Breast epithelium (tissue), 4 donors: ENCODE measurements at regions of chr4 and their contacts with region 1.

Region 1: DNA sequence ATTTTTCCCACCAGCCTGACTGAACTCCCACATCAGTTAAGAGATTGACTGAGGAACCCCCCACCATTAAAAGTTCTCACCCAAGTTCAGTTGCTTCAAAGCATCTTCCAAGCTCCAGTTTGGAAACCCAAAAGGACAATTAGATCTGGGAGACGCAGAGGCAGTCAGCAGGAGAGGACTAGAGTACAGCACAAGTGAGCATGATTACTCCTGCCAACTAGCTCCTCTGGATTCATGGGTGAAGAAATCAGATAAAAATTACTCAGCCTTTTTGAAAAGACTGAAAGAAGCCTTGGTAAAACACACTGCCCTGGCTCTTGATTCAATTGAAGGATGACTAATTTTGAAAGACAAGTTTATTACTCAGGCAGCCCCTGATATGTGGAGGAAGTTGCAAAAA is 297.5 kb downstream of the ADAM29 start:
- DNase-seq: no peak
- H3K4me3 ChIP-seq: no peak overlapping the region
- H3K27ac ChIP-seq: no peak overlapping the region
- H3K4me1 ChIP-seq: no peaks in the 10 kb centered on the region
- H3K27me3 ChIP-seq: no peaks in the 10 kb centered on the region
- CTCF ChIP-seq: no peak
- POLR2A ChIP-seq: no peak

Region 2: GRCh38 chr4:173845580-173845979 is 1370.1 kb before region 1 on chr4:
- intact Hi-C with region 1: no loop called
- DNase-seq: no peak
- H3K4me3 ChIP-seq: no peak overlapping the region
- H3K27ac ChIP-seq: no peak overlapping the region
- H3K4me1 ChIP-seq: no peaks in the 10 kb centered on the region
- H3K27me3 ChIP-seq: no peaks in the 10 kb centered on the region
- CTCF ChIP-seq: no peak
- POLR2A ChIP-seq: no peak

Region 3: GRCh38 chr4:174265916-174266315 is 949.7 kb before region 1 on chr4:
- intact Hi-C with region 1: no loop called
- DNase-seq: no peak
- H3K4me3 ChIP-seq: no peak overlapping the region
- H3K27ac ChIP-seq: no peak overlapping the region
- H3K4me1 ChIP-seq: no peaks in the 10 kb centered on the region
- H3K27me3 ChIP-seq: no peaks in the 10 kb centered on the region
- CTCF ChIP-seq: no peak
- POLR2A ChIP-seq: no peak

Region 4: DNA sequence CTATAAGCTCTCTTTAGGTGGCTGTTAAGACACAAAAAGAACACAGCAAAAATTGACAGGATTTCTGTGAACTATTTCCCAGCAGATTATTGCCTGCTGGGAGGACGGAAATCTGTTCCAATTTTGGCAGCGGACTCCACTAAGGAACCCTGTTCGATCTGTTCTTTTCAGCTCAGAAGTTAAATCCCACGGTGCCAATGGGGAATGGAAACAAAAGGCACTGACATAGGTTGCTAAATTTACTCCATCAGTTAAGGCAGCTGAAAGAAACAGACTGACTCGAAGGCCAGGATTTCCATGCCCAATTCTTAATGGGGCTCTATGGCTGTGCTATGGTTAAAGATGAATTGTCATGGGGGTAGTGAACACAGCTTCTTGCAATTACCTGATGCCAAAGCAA is 566.8 kb before region 1 on chr4:
- intact Hi-C with region 1: no loop called
- DNase-seq: no peak
- H3K4me3 ChIP-seq: no peak overlapping the region
- H3K27ac ChIP-seq: no peak overlapping the region
- H3K4me1 ChIP-seq: no peaks in the 10 kb centered on the region
- H3K27me3 ChIP-seq: no peaks in the 10 kb centered on the region
- CTCF ChIP-seq: no peak
- POLR2A ChIP-seq: no peak

Region 5: DNA sequence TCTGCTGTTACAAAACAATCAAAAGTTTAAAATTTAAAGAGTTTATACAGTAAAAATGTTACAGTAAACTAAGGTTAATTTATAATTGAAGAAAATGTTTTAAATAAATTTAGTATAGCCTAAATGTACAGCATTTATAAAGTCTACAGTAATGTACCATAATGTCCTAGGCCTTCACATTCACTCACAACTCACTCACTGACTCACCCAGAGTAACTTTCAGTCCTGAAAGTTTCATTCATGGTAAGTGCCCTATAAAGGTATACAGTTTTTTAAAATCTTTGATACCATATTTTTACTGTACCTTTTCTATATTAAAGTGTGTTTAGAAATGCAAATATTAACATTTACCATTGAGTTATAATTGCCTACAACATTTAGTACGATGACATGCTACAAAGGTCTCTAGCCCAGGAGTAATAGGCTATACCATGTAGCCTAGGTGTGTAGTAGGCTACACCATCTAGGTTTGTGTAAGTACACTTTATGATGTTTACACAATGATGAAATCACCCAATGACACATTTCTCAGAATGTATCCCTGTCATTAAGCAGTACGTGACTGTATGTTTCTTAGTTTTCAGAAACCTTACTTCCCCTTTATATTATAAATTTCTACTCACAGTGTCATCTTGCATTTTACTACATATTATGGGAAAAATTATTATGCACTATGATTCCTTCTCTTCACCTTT is 23.3 kb after region 1 on chr4:
- intact Hi-C with region 1: loop called (anchors 2 kb)
- DNase-seq: no peak
- H3K4me3 ChIP-seq: no peak overlapping the region
- H3K27ac ChIP-seq: no peak overlapping the region
- H3K4me1 ChIP-seq: no peaks in the 10 kb centered on the region
- H3K27me3 ChIP-seq: no peaks in the 10 kb centered on the region
- CTCF ChIP-seq: no peak
- POLR2A ChIP-seq: no peak

Region 6: DNA sequence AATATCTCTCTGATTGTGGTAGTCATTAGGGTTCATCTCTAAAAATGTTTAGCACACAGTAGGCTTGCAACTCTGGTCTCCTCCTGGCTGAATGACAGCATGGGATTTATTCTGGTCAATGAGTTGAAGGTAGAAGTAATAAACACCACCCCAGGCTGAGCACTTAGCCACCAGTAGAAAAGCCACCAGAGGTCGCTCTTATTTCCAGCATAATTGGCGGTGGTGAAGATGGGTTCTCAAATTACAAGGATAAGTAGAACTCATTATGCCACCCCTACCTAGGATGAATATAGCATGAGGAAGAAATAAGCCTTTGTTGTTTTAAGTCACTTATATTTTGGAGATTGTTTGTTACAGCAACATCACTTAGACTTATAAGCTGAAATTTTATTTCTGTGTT is 293.7 kb after region 1 on chr4:
- intact Hi-C with region 1: no loop called
- DNase-seq: no peak
- H3K4me3 ChIP-seq: no peak overlapping the region
- H3K27ac ChIP-seq: no peak overlapping the region
- H3K4me1 ChIP-seq: no peaks in the 10 kb centered on the region
- H3K27me3 ChIP-seq: no peaks in the 10 kb centered on the region
- CTCF ChIP-seq: no peak
- POLR2A ChIP-seq: no peak